Gastrocnemius medialis (tissue), 4 donors: ENCODE measurements at regions of chr11 and their contacts with region 1.

Region 1: GRCh38 chr11:62269650-62270278 is at the start of gene SCGB2A2:
- DNase-seq: no peak
- ATAC-seq: no peak
- H3K4me3 ChIP-seq: no peak within 1 kb of the TSS
- H3K27ac ChIP-seq: no peak within 1 kb of the TSS
- H3K4me1 ChIP-seq: no peaks in the 10 kb centered on the region
- H3K27me3 ChIP-seq: no peaks in the 10 kb centered on the region
- CTCF ChIP-seq: peak in 2 of 5 experiments; percentile 25 to 32
- POLR2A ChIP-seq: no peak
- total RNA-seq, gene SCGB2A2: not detected

Region 2: DNA sequence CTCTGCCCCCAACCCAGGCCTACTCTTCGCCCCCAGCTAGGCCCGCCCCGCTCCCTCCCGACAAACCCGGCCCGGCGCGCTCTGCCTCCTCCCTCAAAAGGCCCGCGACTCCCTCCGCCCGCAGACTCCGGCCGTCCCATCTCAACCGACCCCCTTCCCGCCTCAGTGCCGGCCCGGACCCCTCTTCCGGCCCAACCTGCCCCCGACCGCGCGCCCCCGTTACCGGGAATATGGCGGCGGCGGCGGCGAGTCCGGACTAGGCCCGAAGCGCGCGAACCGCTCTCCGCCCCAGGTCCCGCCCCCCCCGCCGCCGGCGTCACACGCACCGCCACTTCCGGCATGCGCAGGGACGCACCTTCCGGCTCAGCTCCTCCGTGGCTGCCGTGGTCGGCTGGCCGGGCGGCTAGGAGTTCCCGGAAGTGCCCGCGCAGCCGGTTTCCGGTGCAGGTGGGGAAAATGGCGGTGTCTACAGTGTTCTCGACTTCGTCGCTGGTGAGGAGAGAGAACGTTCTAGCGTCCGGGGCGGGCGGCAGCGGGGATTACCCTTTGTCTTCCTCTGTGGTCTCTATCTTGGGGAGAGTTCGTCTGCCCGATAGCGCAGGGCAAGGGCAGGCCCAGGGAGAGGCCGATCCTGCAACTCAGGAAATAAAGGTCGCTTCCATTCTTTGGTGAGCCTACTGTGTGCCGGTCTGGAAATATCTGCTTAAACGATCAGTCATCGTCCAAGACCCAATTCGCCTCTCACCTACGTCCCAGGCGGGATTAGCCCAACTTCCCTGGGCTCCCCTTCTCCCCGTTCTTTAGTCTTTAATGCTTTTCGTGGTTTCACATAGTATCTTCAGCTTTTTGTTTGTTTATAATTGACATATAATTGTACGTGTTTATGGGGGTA is 839.8 kb before region 1 on chr11 and contains the starts of genes CPSF7 and SDHAF2:
- in situ Hi-C with region 1: no loop called
- intact Hi-C with region 1: no loop called
- DNase-seq: peak; percentile 94 to 95
- ATAC-seq: peak; percentile 94 to 98
- H3K4me3 ChIP-seq: peak within 1 kb of the TSS; percentile 73 to 89 (median 76)
- H3K27ac ChIP-seq: peak within 1 kb of the TSS; percentile 90 to 98 (median 94)
- H3K4me1 ChIP-seq: peaks cover 19 to 30% of the 10 kb centered on the region in 2 donors
- H3K27me3 ChIP-seq: no peaks in the 10 kb centered on the region
- CTCF ChIP-seq: peak in 1 of 5 experiments; percentile 13
- POLR2A ChIP-seq: peak; percentile 82 to 87
- total RNA-seq, gene CPSF7: 38.9 to 180 (median 42.5) TPM
- total RNA-seq, gene SDHAF2: 32.1 to 84.4 (median 53.8) TPM

Region 3: DNA sequence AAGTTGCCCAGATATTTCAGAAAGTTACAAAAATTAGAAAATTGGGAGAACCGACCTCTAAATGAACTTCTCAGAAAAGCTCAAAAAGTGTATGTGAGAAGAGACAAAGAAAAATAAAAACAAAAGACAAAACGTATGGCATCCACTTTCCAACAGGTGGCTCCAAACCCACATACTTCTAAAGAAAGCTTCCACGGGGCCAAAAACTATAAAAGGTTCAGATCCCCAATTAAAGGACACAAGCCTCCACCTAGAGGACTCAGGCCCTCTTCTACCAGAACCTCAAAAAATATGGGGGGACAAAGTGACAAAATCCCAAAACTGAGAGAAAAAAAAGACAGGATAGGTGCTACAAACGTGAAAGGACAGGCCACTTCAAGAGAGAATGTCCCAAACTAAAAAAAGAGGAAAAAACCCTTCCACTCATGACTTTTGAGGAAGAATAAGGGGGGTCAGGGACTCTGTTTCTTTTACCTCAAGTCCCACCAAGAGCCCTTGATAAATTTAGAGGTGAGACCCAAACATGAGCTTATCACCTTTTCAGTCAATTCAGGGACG is 52.5 kb before region 1 on chr11:
- in situ Hi-C with region 1: no loop called
- intact Hi-C with region 1: loop called (anchors 5 kb)
- DNase-seq: no peak
- ATAC-seq: no peak
- H3K4me3 ChIP-seq: no peak overlapping the region
- H3K27ac ChIP-seq: no peak overlapping the region
- H3K4me1 ChIP-seq: no peaks in the 10 kb centered on the region
- H3K27me3 ChIP-seq: no peaks in the 10 kb centered on the region
- CTCF ChIP-seq: peak in 3 of 5 experiments; percentile 10 to 22 (median 18)
- POLR2A ChIP-seq: no peak